ENCODE measurements at regions of chr17 and their contacts with region 1.

Region 1: DNA sequence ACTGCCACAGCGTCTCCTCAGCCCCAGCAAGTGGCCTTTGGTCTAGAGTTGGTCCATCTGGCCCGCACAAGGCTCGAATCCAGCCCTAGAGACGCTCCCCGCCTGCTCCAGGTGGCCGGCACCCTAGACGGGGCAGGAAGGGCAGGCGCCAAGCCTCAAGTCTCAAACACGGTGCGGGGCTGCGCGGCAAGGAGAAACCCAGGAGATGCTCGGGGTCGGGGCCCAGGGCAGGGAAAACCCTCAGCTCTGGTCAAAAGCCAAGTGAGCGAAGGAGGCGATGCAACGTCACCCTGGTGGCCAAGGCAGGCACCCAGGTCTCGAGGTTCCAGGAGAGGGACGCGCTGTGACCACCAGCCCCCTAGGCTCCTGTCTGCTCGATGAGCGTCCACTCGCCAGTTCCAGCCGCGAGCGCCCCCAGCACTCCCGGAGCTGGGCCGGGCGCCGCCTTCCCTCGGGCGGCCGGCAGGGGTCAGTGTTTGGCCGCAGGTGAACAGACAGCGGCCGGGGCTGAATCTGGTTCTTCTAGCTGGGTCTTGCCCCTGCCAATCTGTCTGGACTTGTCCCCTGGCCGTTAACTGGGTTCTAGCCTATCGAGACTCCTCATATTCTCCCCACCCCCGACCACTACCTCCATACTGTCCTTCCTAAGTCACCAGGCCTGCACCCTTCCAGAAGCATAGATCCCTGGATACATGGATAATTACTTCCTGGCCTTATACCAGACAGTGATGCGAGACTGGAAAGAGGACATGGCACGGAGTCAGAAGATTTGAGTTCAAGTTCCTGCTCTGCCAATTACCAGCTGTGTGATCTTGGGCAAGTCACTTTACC is 44.0 kb downstream of the PRAC1 start:
- H3K4me3 ChIP-seq: no peak overlapping the region
- H3K27ac ChIP-seq: no peak overlapping the region
- H3K4me1 ChIP-seq: no peaks in the 10 kb centered on the region
- CTCF ChIP-seq: peak; percentile 98

Region 2: GRCh38 chr17:48593840-48594537 is 84.4 kb before region 1 on chr17:
- CTCF ChIA-PET with region 1: no interaction called
- POLR2A ChIA-PET with region 1: no interaction called
- H3K4me3 ChIP-seq: no peak overlapping the region; the same call in 1 of the 2 replicates
- H3K27ac ChIP-seq: peak overlapping the region; percentile 68
- H3K4me1 ChIP-seq: peaks cover 31% of the 10 kb centered on the region
- CTCF ChIP-seq: peak; percentile 98

Region 3: GRCh38 chr17:48646183-48647102 is 31.9 kb before region 1 on chr17:
- CTCF ChIA-PET with region 1: interaction called, 11 read pairs
- POLR2A ChIA-PET with region 1: interaction called, 3 read pairs
- H3K4me3 ChIP-seq: peak overlapping the region; percentile 80
- H3K27ac ChIP-seq: peak overlapping the region; percentile 93
- H3K4me1 ChIP-seq: peaks cover 6% of the 10 kb centered on the region
- CTCF ChIP-seq: peak; percentile 9; the same call in 1 of the 2 replicates

Region 4: DNA sequence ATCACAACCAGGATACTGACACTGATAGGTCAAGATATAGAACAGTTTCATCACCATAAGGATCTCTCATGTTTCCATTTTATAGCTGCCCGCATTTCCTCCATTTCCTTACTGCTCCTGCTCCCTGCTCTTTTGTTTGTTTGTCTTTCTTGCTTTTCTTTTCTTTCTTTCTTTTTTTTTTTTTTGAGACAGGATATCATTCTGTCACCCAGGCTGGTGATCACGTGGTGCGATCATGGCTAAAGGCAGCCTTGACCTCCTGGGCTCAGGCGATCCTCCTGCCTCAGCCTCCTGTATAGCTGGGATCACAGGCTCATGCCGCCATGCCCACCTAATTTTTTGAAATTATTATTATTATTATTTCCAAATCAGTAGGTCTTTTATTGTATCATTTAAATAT is 12.3 kb after region 1 on chr17:
- CTCF ChIA-PET with region 1: interaction called, 62 read pairs
- POLR2A ChIA-PET with region 1: no interaction called
- H3K4me3 ChIP-seq: no peak overlapping the region
- H3K27ac ChIP-seq: no peak overlapping the region
- H3K4me1 ChIP-seq: no peaks in the 10 kb centered on the region
- CTCF ChIP-seq: no peak

Region 5: GRCh38 chr17:48711102-48711501 is 32.7 kb after region 1 on chr17:
- CTCF ChIA-PET with region 1: interaction called, 16 read pairs
- POLR2A ChIA-PET with region 1: no interaction called
- H3K4me3 ChIP-seq: no peak overlapping the region
- H3K27ac ChIP-seq: no peak overlapping the region
- H3K4me1 ChIP-seq: no peaks in the 10 kb centered on the region
- CTCF ChIP-seq: no peak

Region 6: DNA sequence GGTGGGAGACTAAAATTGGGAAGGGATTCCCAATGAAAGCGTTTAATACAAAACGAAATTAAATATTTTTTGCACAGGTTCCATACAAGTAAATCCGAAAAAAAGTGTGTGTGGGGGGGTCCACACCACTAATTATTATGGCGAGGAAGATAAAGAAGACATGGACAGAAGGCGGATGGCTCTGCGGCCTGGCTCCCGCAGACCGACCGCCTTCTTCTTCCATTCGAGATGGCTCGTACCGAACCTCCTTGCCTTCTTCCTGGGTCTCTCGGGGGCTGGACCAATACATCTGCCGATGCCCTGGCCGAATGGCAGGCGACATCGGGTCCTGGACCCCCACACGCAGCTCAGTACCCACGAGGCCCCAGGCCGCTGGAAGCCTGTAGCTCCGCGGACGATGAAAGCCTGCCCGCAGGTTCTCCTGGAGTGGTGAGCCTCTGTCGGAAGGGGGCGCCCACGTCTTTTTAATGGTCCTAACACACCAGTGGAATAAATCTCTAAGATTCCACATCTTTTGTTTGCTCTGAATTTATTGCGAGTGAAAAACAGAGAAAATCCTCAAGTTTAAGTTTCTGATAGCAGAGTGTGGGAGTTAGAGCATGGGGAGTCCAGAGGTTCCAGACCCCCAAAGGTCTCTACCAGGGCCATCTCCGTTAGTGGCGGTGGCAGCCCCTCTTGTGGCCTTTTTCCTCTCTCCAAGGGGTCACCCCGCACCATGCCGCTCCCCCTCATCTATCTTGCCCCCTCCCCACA is 46.1 kb after region 1 on chr17:
- CTCF ChIA-PET with region 1: interaction called, 118 read pairs
- POLR2A ChIA-PET with region 1: interaction called, 6 read pairs
- H3K4me3 ChIP-seq: no peak overlapping the region
- H3K27ac ChIP-seq: no peak overlapping the region
- H3K4me1 ChIP-seq: peaks cover 3% of the 10 kb centered on the region
- CTCF ChIP-seq: peak; percentile 56

Region 7: DNA sequence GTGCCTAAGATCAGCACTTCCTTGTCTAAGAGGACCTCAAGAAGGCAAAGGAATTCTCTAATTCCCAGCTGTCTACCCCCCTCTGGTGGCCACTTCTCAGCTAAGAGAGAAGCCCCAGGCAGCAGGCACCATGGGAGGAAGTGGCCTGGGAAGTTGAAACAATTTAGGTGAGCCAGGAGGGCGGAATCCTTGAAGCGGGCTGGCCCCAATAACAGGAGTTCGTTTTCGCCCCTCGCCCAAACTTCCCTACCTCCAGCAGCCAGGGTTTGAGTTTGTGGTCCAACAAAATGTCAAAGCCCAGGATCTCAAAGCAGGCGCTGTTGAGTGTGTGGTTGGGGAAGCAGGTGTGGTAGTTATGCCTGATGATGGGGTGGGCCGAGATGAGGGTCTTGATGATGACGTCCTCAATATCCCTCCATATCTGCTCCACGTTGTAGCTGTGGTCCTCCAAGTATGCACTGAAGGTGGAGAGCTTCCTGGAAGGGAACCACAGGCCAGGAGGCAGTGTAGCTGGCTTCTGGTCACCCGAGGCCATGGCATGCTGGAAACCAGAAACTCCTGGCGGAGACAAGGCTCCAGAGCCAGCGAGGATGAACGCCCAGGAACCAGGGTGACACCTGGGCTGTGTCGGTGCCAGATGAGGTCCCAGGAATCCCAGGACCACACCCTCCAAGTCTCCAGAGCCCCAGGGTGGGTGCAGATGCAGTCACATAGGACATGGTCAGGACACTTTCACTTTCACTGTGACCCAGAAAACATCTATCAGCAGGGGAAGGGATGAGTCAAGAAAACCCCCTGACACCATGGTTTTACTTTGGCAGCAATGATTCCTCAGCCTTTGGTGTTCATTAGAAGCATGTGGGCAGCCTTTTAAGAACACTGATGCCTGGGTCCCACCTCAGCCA is 113.0 kb after region 1 on chr17:
- CTCF ChIA-PET with region 1: interaction called, 299 read pairs
- POLR2A ChIA-PET with region 1: interaction called, 5 read pairs
- H3K4me3 ChIP-seq: no peak overlapping the region
- H3K27ac ChIP-seq: no peak overlapping the region
- H3K4me1 ChIP-seq: no peaks in the 10 kb centered on the region
- CTCF ChIP-seq: peak; percentile 70; the same call in 1 of the 2 replicates

Region 8: GRCh38 chr17:48816774-48817590 is 138.6 kb after region 1 on chr17 and contains the start of gene TTLL6:
- CTCF ChIA-PET with region 1: interaction called, 21 read pairs
- POLR2A ChIA-PET with region 1: interaction called, 3 read pairs
- H3K4me3 ChIP-seq: peak within 1 kb of the TSS; percentile 43
- H3K27ac ChIP-seq: no peak within 1 kb of the TSS; the same call in 1 of the 2 replicates
- H3K4me1 ChIP-seq: peaks cover 4% of the 10 kb centered on the region
- CTCF ChIP-seq: peak; percentile 44; the same call in 1 of the 2 replicates